ENCODE measurements at regions of chr17 and their contacts with region 1.

Region 1: DNA sequence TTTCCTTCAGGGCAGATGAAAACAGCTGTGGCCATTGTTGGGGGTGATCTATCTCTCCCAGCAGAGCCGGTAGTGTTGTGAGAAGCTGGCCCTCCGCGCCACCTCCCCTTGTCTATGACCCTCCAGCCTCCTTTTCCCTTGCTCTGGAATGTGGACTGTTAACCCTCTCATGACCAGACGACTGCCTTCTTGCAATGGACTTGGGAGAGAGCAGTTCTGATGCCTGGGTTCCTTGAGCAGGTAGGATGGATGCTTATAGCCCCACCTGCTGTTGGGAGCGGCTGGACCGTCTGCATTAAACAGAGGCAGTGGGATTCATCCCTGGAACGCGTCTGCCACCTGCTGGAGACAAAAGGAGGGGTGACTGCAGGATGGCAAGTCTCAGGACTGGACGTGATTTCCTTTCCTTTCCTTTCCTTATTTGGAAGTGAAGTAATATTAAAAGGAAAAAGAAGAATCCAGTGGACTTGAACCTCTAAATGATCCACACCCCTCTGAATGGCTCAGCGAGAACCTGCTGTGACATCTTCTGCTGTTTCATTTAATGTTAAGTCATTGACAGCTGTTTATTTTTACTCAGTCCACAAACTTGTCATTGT is 1.8 kb upstream of the SOST start:
- DNase-seq: peak; percentile 91 to 93
- H3K4me3 ChIP-seq: no peak overlapping the region
- H3K27ac ChIP-seq: no peak overlapping the region
- H3K4me1 ChIP-seq: no peaks in the 10 kb centered on the region
- H3K27me3 ChIP-seq: peaks cover 0 to 5% of the 10 kb centered on the region in 2 donors
- CTCF ChIP-seq: peak; percentile 98 to 100 (median 98)
- POLR2A ChIP-seq: no peak

Region 2: GRCh38 chr17:43576563-43577229 is 183.7 kb before region 1 on chr17:
- intact Hi-C with region 1: loop called (anchors 10 kb)
- DNase-seq: peak; percentile 69 to 74
- H3K4me3 ChIP-seq: no peak overlapping the region
- H3K27ac ChIP-seq: no peak overlapping the region
- H3K4me1 ChIP-seq: peaks cover 0 to 4% of the 10 kb centered on the region in 2 donors
- H3K27me3 ChIP-seq: no peaks in the 10 kb centered on the region
- CTCF ChIP-seq: peak; percentile 93 to 95 (median 94)
- POLR2A ChIP-seq: no peak

Region 3: DNA sequence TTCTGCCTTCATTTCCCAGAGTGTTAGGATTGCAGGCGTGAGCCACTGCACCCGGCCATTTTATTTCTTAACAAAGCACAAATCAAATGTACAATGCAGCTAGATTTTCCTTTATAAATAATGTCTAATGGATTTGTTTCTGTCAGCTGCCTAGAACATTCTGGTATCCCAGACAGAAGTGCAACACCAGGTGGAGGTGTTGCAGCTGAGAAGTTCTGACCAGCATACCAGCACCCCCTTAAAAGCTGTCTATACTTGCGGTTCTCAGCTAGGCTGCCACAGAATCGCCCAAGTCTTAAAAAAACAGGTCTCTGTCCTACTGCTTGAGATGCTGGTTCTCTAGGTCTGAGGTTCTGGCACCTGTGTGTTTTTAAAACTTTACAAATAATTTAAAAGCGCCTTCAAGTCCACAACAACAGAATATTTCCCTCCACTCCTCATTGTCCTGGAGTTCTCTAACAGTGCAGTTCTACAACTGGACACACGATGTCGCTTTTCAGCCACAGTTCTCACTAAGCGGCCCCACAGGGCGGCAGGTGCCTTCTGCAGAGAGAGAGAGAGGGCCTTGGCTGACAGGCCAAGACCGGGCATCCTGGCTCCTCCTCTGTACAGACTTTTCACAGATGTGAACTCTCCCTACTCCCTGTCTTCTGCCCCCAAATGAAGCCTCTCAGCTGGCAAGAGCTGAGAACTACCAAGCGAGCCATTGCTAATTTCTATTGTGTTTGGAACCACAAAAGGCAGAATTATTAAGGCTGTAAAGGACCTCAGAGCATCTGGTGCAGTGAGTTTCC is 66.1 kb before region 1 on chr17:
- intact Hi-C with region 1: loop called (anchors 2 kb)
- DNase-seq: peak; percentile 66 to 80
- H3K4me3 ChIP-seq: no peak overlapping the region
- H3K27ac ChIP-seq: no peak overlapping the region
- H3K4me1 ChIP-seq: no peaks in the 10 kb centered on the region
- H3K27me3 ChIP-seq: no peaks in the 10 kb centered on the region
- CTCF ChIP-seq: peak; percentile 87 to 97 (median 92)
- POLR2A ChIP-seq: no peak

Region 4: GRCh38 chr17:43861024-43861621 is 100.8 kb after region 1 on chr17:
- intact Hi-C with region 1: no loop called
- DNase-seq: peak; percentile 31 to 61
- H3K4me3 ChIP-seq: no peak overlapping the region
- H3K27ac ChIP-seq: peak overlapping the region in 1 of 2 donors; percentile 14
- H3K4me1 ChIP-seq: no peaks in the 10 kb centered on the region
- H3K27me3 ChIP-seq: no peaks in the 10 kb centered on the region
- CTCF ChIP-seq: no peak
- POLR2A ChIP-seq: no peak